CD4-positive, alpha-beta T cell (primary cell): ENCODE measurements at regions of chr5 and their contacts with region 1.

Region 1: GRCh38 chr5:155451106-155451505 is 437.6 kb downstream of the KIF4B start:
- DNase-seq: no peak
- ATAC-seq: no peak
- H3K4me3 ChIP-seq: no peak overlapping the region
- H3K4me3 Mint-ChIP-seq: no peak overlapping the region
- H3K27ac ChIP-seq: no peak overlapping the region
- H3K27ac Mint-ChIP-seq: no peak overlapping the region
- H3K4me1 ChIP-seq: no peaks in the 10 kb centered on the region
- H3K4me1 Mint-ChIP-seq: no peaks in the 10 kb centered on the region
- H3K27me3 ChIP-seq: no peaks in the 10 kb centered on the region
- H3K27me3 Mint-ChIP-seq: no peaks in the 10 kb centered on the region
- CTCF ChIP-seq: no peak

Region 2: DNA sequence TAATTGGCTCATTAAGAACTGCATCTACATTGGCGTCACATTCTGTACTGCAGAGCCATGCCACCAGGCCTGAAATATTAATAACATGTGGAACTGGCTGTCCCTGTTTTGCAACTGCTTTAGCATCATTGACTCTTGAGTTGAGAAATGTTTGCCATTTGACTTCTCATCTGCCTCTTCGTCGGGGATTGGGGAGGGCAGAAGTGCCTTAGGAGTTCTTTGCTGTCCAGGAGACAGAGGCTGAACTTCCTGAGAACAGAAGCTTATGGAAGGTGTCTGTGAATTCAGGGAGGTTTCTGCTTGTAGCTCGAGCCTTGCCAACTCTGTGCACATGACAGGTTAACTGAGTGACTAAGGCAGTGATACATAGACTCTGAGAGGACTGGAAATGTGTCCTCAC is 172.6 kb before region 1 on chr5:
- CTCF ChIA-PET with region 1: no interaction called
- POLR2A ChIA-PET with region 1: no interaction called
- intact Hi-C with region 1: loop called in 1 of 2 experiments (anchors 5 kb)
- DNase-seq: no peak
- ATAC-seq: no peak
- H3K4me3 ChIP-seq: no peak overlapping the region
- H3K4me3 Mint-ChIP-seq: no peak overlapping the region
- H3K27ac ChIP-seq: no peak overlapping the region
- H3K27ac Mint-ChIP-seq: no peak overlapping the region
- H3K4me1 ChIP-seq: no peaks in the 10 kb centered on the region
- H3K4me1 Mint-ChIP-seq: no peaks in the 10 kb centered on the region
- H3K27me3 ChIP-seq: peaks cover 0 to 5% of the 10 kb centered on the region in 2 experiments
- H3K27me3 Mint-ChIP-seq: peaks cover 49% of the 10 kb centered on the region
- CTCF ChIP-seq: no peak

Region 3: GRCh38 chr5:155316070-155316714 is 134.9 kb before region 1 on chr5:
- CTCF ChIA-PET with region 1: no interaction called
- POLR2A ChIA-PET with region 1: no interaction called
- intact Hi-C with region 1: no loop called
- DNase-seq: no peak
- ATAC-seq: no peak
- H3K4me3 ChIP-seq: no peak overlapping the region
- H3K4me3 Mint-ChIP-seq: no peak overlapping the region
- H3K27ac ChIP-seq: no peak overlapping the region
- H3K27ac Mint-ChIP-seq: no peak overlapping the region
- H3K4me1 ChIP-seq: no peaks in the 10 kb centered on the region
- H3K4me1 Mint-ChIP-seq: no peaks in the 10 kb centered on the region
- H3K27me3 ChIP-seq: no peaks in the 10 kb centered on the region
- H3K27me3 Mint-ChIP-seq: no peaks in the 10 kb centered on the region
- CTCF ChIP-seq: no peak